Ovary (tissue), 10 donors: ENCODE measurements at regions of chr1 and their contacts with region 1.

Region 1: DNA sequence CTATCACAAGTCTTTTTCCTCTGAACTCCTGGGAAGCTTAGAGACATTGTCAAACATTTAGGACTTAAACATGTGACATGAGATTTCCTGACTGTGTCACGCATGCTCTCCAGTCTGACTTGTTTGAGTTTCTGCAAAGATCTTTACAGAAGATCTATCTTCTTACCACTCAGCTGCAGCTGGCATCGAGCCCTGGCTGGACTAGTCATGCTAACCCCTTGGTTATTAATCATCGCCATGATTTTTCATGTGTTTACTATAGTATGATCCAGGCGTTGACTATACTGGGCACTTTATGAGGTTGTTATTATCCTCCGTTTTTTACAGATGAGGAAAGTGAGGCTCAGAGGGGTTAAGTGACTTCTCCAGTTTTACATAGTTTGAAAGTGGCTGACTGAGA is 18.1 kb upstream of the IRF2BP2 start:
- DNase-seq: no peak
- H3K4me3 ChIP-seq: no peak overlapping the region
- H3K27ac ChIP-seq: no peak overlapping the region
- H3K4me1 ChIP-seq: no peaks in the 10 kb centered on the region
- H3K27me3 ChIP-seq: no peaks in the 10 kb centered on the region
- CTCF ChIP-seq: no peak
- EP300 ChIP-seq: no peak
- POLR2A ChIP-seq: no peak

Region 2: GRCh38 chr1:234665975-234666605 is 38.0 kb after region 1 on chr1:
- intact Hi-C with region 1: loop called in 2 of 4 experiments (anchors 5 to 10 kb)
- DNase-seq: no peak
- H3K4me3 ChIP-seq: no peak overlapping the region
- H3K27ac ChIP-seq: no peak overlapping the region
- H3K4me1 ChIP-seq: no peaks in the 10 kb centered on the region
- H3K27me3 ChIP-seq: no peaks in the 10 kb centered on the region
- CTCF ChIP-seq: no peak
- EP300 ChIP-seq: no peak
- POLR2A ChIP-seq: no peak

Region 3: GRCh38 chr1:234743791-234744611 is 115.9 kb after region 1 on chr1:
- intact Hi-C with region 1: no loop called
- DNase-seq: peak in 4 of 5 donors; percentile 41 to 58 (median 52)
- H3K4me3 ChIP-seq: no peak overlapping the region
- H3K27ac ChIP-seq: peak overlapping the region in 1 of 2 donors; percentile 65
- H3K4me1 ChIP-seq: no peaks in the 10 kb centered on the region
- H3K27me3 ChIP-seq: no peaks in the 10 kb centered on the region
- CTCF ChIP-seq: no peak
- EP300 ChIP-seq: no peak
- POLR2A ChIP-seq: no peak

Region 4: DNA sequence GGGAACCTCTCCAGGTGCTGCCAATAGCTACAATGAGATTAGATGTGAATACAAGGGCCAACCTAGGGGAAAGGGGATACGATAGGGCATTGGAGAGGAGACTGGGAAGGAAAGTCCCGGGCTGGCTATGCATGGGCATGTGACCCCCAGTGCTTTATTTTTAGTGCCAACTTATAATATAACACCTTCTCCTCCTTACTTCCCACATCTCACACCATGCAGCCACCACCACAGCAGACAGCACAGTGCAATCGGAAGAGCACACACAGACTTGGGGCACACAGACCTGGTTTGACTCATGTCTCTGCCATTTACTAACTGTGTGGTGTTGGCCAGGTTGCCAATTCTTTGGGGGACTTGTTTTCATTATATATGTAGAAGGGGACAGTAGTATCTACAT is 415.1 kb after region 1 on chr1:
- intact Hi-C with region 1: no loop called
- DNase-seq: no peak
- H3K4me3 ChIP-seq: no peak overlapping the region
- H3K27ac ChIP-seq: no peak overlapping the region
- H3K4me1 ChIP-seq: peaks cover 7% of the 10 kb centered on the region
- H3K27me3 ChIP-seq: no peaks in the 10 kb centered on the region
- CTCF ChIP-seq: no peak
- EP300 ChIP-seq: no peak
- POLR2A ChIP-seq: no peak